B cell (primary cell): ENCODE measurements at regions of chr17 and their contacts with region 1.

Region 1: GRCh38 chr17:80454557-80455335 is 21.7 kb downstream of the NPTX1 start:
- DNase-seq: peak; percentile 97
- ATAC-seq: peak; percentile 92
- H3K4me3 ChIP-seq: peak overlapping the region; percentile 23 to 88 (median 87)
- H3K4me3 Mint-ChIP-seq: peak overlapping the region; percentile 91
- H3K27ac ChIP-seq: peak overlapping the region; percentile 92 to 99
- H3K27ac Mint-ChIP-seq: peak overlapping the region; percentile 96
- H3K4me1 ChIP-seq: peaks cover 7 to 17% of the 10 kb centered on the region in 2 donors
- H3K4me1 Mint-ChIP-seq: peaks cover 18% of the 10 kb centered on the region
- H3K27me3 ChIP-seq: peaks cover 0 to 28% (median 0%) of the 10 kb centered on the region in 4 experiments
- H3K27me3 Mint-ChIP-seq: peaks cover 20% of the 10 kb centered on the region
- CTCF ChIP-seq: no peak

Region 2: DNA sequence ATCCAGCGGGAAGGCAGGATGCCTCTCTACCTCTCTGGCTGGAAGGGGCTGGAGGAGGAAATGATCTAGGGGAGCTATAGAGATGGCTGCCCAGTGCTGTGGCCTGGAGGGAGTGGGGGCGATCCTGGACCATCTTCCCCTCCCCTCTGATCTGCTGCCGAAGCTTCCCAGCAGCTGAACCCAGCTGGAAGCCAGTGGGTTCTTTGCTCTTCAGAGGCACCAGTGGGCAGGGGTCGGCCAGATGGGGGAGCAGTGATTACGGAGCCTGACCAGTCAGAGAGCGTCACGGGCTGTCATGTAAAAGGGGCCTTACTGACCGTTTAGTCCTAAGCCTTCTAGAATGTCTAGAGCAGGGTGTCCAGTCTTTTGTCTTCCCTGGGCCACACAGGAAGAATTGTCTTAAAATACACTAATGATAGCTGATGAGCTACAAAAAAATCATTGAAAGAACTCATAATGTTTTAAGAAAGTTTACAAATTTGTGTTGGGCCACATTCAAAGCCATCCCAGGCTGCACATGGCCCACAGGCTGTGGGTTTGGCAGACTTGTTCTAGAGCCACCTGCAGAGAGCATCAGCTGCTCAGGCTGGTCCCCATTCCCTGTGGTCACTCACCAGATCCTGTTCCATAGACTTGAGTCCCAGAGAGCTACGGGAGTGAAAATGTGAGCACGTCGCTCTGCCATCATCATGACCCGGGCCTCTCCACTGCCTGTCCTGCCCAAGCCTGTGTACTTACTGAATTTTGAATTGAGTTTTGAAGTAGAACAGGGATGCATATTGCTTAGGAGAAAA is 227.8 kb before region 1 on chr17:
- CTCF ChIA-PET with region 1: no interaction called
- POLR2A ChIA-PET with region 1: no interaction called
- intact Hi-C with region 1: no loop called
- DNase-seq: no peak
- ATAC-seq: no peak
- H3K4me3 ChIP-seq: no peak overlapping the region
- H3K4me3 Mint-ChIP-seq: no peak overlapping the region
- H3K27ac ChIP-seq: no peak overlapping the region
- H3K27ac Mint-ChIP-seq: no peak overlapping the region
- H3K4me1 ChIP-seq: no peaks in the 10 kb centered on the region
- H3K4me1 Mint-ChIP-seq: no peaks in the 10 kb centered on the region
- H3K27me3 ChIP-seq: peaks cover 0 to 2% (median 0%) of the 10 kb centered on the region in 4 experiments
- H3K27me3 Mint-ChIP-seq: no peaks in the 10 kb centered on the region
- CTCF ChIP-seq: no peak

Region 3: GRCh38 chr17:80307994-80308691 is 146.6 kb before region 1 on chr17:
- CTCF ChIA-PET with region 1: no interaction called
- POLR2A ChIA-PET with region 1: no interaction called
- intact Hi-C with region 1: no loop called
- DNase-seq: no peak
- ATAC-seq: no peak
- H3K4me3 ChIP-seq: no peak overlapping the region
- H3K4me3 Mint-ChIP-seq: no peak overlapping the region
- H3K27ac ChIP-seq: no peak overlapping the region
- H3K27ac Mint-ChIP-seq: no peak overlapping the region
- H3K4me1 ChIP-seq: no peaks in the 10 kb centered on the region
- H3K4me1 Mint-ChIP-seq: no peaks in the 10 kb centered on the region
- H3K27me3 ChIP-seq: no peaks in the 10 kb centered on the region
- H3K27me3 Mint-ChIP-seq: no peaks in the 10 kb centered on the region
- CTCF ChIP-seq: no peak

Region 4: DNA sequence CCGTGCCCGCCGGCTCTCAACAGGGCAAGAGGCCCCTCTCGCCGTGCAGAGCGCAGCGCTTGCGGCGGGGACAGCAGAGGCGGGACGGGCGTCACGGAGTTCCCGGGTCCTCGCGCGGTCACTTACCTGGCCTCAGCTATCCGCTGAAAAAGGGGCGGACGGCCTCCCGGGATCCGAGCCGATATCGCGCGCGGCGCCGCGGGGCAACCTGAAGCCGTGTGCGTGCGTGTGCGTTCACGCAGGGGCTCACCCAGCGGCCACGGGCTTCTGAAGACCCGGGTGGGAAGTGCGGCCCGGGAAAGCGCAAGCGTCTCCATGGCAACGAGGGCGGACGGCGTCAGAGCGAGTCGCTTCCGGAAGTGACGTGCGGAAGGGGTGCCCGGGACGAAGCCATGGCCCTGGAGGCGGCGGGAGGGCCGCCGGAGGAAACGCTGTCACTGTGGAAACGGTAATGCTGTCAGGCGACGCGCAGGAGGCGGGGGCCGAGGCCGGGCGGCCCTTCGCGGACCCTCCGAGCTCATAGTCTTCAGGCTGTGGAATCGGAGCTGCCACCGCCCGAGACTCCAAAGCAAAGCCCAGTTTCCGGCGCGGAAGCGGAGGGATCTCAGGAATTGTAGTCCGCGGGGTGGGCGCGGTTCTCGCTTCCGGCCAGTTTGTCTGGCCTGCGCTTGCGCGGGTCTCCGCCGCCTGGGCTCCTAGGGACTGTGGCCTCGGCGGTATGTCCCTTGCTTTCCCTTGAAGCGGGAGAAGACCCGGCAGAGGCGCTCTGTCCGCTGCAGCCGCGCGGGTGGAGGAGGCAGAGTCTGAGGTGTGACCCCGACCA is 39.7 kb before region 1 on chr17 and contains the start of gene ENDOV:
- CTCF ChIA-PET with region 1: no interaction called
- POLR2A ChIA-PET with region 1: interaction called, 3 read pairs
- intact Hi-C with region 1: loop called (anchors 1 kb)
- DNase-seq: peak; percentile 98
- ATAC-seq: peak; percentile 93
- H3K4me3 ChIP-seq: peak within 1 kb of the TSS; percentile 36 to 97 (median 82)
- H3K4me3 Mint-ChIP-seq: peak within 1 kb of the TSS; percentile 89
- H3K27ac ChIP-seq: peak within 1 kb of the TSS; percentile 60 to 81
- H3K27ac Mint-ChIP-seq: peak within 1 kb of the TSS; percentile 91
- H3K4me1 ChIP-seq: peaks cover 14 to 20% of the 10 kb centered on the region in 2 donors
- H3K4me1 Mint-ChIP-seq: peaks cover 24% of the 10 kb centered on the region
- H3K27me3 ChIP-seq: peaks cover 0 to 9% (median 2%) of the 10 kb centered on the region in 4 experiments
- H3K27me3 Mint-ChIP-seq: peaks cover 21% of the 10 kb centered on the region
- CTCF ChIP-seq: no peak
- total RNA-seq, gene ENDOV: 49.1 and 49.5 TPM in 2 replicates

Region 5: DNA sequence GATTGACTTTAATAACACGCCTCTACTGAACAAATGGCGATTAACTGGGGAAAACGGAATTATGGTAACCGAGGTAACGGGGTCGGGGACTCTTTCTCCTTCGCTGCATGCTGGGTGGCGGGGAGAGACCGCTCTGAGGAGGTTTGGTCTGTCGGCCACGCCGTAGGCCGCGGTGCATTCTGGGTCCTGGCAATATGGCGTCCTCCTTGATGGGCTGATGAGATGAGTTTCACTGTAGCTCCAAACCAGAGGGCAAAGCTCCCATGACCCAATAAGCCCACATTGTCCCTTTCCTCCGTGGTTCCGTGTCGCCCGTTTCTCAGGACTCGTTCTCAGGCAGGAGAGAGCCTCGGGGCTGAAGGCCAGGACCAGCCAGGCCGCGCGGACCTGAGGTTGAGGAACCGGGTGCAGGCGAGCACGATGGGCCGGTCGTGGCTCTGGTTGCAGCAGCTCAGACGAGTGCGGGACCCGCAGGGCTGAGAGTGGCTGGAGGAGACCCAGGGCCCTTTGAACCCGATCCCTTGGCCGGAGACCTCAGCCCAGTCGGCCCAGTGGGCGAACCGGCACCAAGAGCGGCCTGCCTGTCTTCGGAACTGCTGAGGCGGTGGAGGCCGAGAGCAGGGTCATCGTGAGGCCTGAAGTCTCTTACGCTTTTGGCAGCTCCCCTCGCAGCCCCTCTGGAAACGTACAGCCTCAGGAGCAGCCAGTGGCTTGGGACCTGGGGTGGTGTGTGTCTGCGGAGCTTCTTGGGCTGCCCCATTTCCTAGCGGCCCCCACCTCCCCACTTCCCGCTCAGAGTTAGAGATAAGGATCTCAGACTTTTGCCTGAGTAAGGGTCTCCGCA is 90.1 kb after region 1 on chr17 and contains the start of gene RPTOR:
- CTCF ChIA-PET with region 1: no interaction called
- POLR2A ChIA-PET with region 1: no interaction called
- intact Hi-C with region 1: loop called (anchors 1 kb)
- DNase-seq: peak; percentile 90
- ATAC-seq: peak; percentile 99
- H3K4me3 ChIP-seq: peak within 1 kb of the TSS; percentile 64 to 95 (median 70)
- H3K4me3 Mint-ChIP-seq: peak within 1 kb of the TSS; percentile 94
- H3K27ac ChIP-seq: peak within 1 kb of the TSS; percentile 22 to 89
- H3K27ac Mint-ChIP-seq: peak within 1 kb of the TSS; percentile 88
- H3K4me1 ChIP-seq: peaks cover 12 to 16% of the 10 kb centered on the region in 2 donors
- H3K4me1 Mint-ChIP-seq: peaks cover 25% of the 10 kb centered on the region
- H3K27me3 ChIP-seq: peaks cover 0 to 12% (median 0%) of the 10 kb centered on the region in 4 experiments
- H3K27me3 Mint-ChIP-seq: peaks cover 17% of the 10 kb centered on the region
- CTCF ChIP-seq: no peak
- total RNA-seq, gene RPTOR: 58.8 and 64.7 TPM in 2 replicates